ENCODE measurements at regions of chr4 and their contacts with region 1.

Region 1: GRCh38 chr4:77819843-77820648 is 878 bp upstream of the CNOT6L start:
- DNase-seq: peak; percentile 95 to 99 (median 98)
- ATAC-seq: peak; percentile 87
- H3K4me3 ChIP-seq: peak overlapping the region; percentile 93
- H3K4me3 Mint-ChIP-seq: peak overlapping the region; percentile 93 to 99 (median 96)
- H3K27ac ChIP-seq: peak overlapping the region; percentile 100
- H3K27ac Mint-ChIP-seq: peak overlapping the region; percentile 88 to 100 (median 99)
- H3K4me1 ChIP-seq: peaks cover 39 to 42% of the 10 kb centered on the region in 2 donors
- H3K4me1 Mint-ChIP-seq: peaks cover 37 to 69% (median 53%) of the 10 kb centered on the region in 7 donors
- H3K27me3 ChIP-seq: no peaks in the 10 kb centered on the region
- H3K27me3 Mint-ChIP-seq: peaks cover 0 to 2% (median 0%) of the 10 kb centered on the region in 5 donors

Region 2: DNA sequence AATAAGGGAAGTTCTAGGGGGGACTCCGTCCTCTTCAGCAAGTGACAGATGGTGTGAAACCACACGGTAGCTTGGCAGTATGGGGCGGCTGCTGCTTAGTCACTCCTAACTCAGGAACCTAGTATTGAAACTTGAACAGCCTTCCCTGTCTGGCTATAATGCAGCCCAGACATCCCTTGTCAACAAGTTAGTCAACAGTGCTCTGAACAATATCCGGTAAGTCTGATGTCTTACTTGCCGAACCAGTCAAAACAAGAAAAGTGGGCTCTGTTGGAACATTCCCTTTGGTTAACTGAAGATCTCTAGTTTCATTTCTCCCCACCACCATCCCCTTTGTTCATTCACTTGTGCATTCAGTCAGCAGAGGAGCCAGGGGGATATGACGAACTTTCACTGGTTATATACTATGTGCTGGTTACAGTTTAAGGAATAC is 233.1 kb before region 1 on chr4:
- CTCF ChIA-PET with region 1: no interaction called
- POLR2A ChIA-PET with region 1: no interaction called
- intact Hi-C with region 1: loop called in 1 of 2 experiments (anchors 2 kb)
- DNase-seq: peak in 2 of 9 donors; percentile 8 to 64
- ATAC-seq: peak; percentile 89
- H3K4me3 ChIP-seq: no peak overlapping the region
- H3K4me3 Mint-ChIP-seq: peak overlapping the region in 1 of 10 donors; percentile 64
- H3K27ac ChIP-seq: no peak overlapping the region
- H3K27ac Mint-ChIP-seq: peak overlapping the region in 2 of 9 donors; percentile 10 to 75
- H3K4me1 ChIP-seq: no peaks in the 10 kb centered on the region
- H3K4me1 Mint-ChIP-seq: peaks cover 0 to 33% (median 9%) of the 10 kb centered on the region in 7 donors
- H3K27me3 ChIP-seq: no peaks in the 10 kb centered on the region
- H3K27me3 Mint-ChIP-seq: peaks cover 0 to 9% (median 0%) of the 10 kb centered on the region in 5 donors

Region 3: DNA sequence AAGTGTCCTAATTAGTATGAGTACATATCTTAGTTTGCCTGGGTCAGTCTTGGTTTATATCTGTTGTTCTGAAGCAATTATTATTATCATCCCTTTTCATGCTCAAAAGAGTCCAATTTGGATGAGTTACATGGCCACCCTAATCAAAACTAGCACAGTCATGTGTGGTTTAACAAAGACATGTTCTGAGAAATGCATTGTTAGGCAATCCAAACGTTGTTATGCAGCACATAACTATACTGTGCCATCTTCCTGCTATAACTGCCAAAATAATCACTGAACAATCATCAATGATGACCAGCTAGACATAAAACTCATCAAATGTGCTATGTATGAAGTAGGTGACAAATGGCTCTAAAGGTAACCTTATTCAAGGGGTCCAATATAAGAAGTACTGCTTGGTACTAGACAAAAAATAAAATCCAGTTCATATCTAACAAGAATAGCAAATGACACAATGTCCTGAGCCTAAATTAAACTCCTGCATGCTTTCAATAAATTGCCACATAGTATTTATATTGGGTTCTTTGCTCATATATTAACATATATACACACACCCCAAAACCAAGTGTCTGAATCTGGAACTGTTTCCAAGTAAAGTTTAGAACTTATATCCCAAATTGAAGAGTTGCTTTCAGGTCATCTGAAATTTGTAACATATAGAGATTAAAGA is 42.8 kb before region 1 on chr4:
- CTCF ChIA-PET with region 1: no interaction called
- POLR2A ChIA-PET with region 1: interaction called, 4 read pairs
- intact Hi-C with region 1: loop called (anchors 5 kb)
- DNase-seq: no peak
- ATAC-seq: peak; percentile 29
- H3K4me3 ChIP-seq: no peak overlapping the region
- H3K4me3 Mint-ChIP-seq: peak overlapping the region in 5 of 10 donors; percentile 4 to 57 (median 23)
- H3K27ac ChIP-seq: no peak overlapping the region
- H3K27ac Mint-ChIP-seq: peak overlapping the region in 7 of 9 donors; percentile 35 to 80 (median 78)
- H3K4me1 ChIP-seq: peaks cover 7 to 12% of the 10 kb centered on the region in 2 donors
- H3K4me1 Mint-ChIP-seq: peaks cover 32 to 74% (median 66%) of the 10 kb centered on the region in 7 donors
- H3K27me3 ChIP-seq: no peaks in the 10 kb centered on the region
- H3K27me3 Mint-ChIP-seq: no peaks in the 10 kb centered on the region

Region 4: DNA sequence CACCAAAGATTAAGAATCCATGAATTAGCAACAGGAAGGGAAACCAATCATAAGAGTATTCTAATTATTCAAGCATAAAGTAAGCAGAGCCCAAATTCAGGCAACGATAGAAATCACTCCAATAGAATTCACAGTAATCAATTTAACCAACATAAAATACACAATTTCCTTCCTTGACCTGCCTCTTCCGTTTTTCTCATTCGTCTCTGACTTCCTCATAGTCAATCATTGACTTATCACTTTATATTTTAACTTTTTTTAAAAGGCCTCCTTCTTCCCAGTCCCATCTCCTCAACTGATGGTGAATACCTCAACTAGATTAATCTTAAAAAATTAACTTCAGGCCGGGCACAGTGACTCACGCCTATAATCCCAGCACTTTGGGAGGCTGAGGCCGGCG is 14.2 kb before region 1 on chr4:
- CTCF ChIA-PET with region 1: no interaction called
- POLR2A ChIA-PET with region 1: interaction called, 41 read pairs
- intact Hi-C with region 1: loop called (anchors 1 kb)
- DNase-seq: no peak
- ATAC-seq: no peak
- H3K4me3 ChIP-seq: no peak overlapping the region
- H3K4me3 Mint-ChIP-seq: peak overlapping the region; percentile 5 to 64 (median 52)
- H3K27ac ChIP-seq: no peak overlapping the region
- H3K27ac Mint-ChIP-seq: peak overlapping the region in 7 of 9 donors; percentile 53 to 82 (median 66)
- H3K4me1 ChIP-seq: peaks cover 39 to 66% of the 10 kb centered on the region in 2 donors
- H3K4me1 Mint-ChIP-seq: peaks cover 54 to 96% (median 76%) of the 10 kb centered on the region in 7 donors
- H3K27me3 ChIP-seq: no peaks in the 10 kb centered on the region
- H3K27me3 Mint-ChIP-seq: no peaks in the 10 kb centered on the region

Region 5: GRCh38 chr4:77843628-77844027 is 23.6 kb after region 1 on chr4:
- CTCF ChIA-PET with region 1: no interaction called
- POLR2A ChIA-PET with region 1: interaction called, 122 read pairs
- intact Hi-C with region 1: no loop called
- DNase-seq: no peak
- ATAC-seq: no peak
- H3K4me3 ChIP-seq: no peak overlapping the region
- H3K4me3 Mint-ChIP-seq: no peak overlapping the region
- H3K27ac ChIP-seq: no peak overlapping the region
- H3K27ac Mint-ChIP-seq: peak overlapping the region in 3 of 9 donors; percentile 0 to 62 (median 55)
- H3K4me1 ChIP-seq: no peaks in the 10 kb centered on the region
- H3K4me1 Mint-ChIP-seq: peaks cover 0 to 24% (median 11%) of the 10 kb centered on the region in 7 donors
- H3K27me3 ChIP-seq: no peaks in the 10 kb centered on the region
- H3K27me3 Mint-ChIP-seq: no peaks in the 10 kb centered on the region

Region 6: DNA sequence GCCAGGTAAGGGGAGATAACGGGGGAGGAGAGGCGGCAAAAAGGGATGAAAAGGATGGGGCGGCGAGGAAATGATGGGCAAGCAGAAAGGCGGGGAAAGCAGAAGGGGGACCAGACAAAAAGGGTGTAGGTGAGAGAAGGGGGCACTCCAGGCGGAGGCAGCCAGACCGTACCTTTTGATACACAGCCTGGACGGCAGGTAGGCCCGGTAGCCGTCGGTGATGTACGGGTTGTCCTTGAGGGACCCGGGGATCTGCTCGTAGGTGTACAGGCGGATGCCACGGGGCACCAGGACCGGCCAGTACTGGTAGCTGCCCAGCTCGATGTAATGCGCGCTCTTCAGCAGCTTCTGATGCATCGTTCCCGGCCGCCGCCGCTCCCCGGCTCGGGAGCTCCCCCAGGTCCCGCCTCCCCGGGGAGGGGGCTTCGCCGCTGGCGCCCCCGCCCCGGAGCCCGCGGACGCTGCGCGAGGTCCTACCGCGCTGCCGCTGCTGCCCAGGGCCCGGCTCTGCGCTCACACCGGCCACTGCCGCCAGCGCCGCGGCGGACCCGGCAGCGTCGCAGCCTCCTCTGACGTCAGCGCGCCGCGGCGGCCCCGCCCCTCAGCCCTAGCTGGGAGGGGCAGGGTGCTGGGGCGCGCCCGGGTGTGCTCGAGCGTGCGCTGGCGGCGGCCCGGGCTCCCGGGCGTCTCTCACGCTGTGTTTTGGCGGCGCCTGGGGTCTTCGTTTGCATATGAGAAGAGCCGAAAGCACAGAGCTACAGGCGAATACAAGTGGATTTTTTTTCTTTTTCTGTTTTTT is 1119.0 kb after region 1 on chr4 and contains the start of gene PAQR3:
- CTCF ChIA-PET with region 1: no interaction called
- POLR2A ChIA-PET with region 1: no interaction called
- intact Hi-C with region 1: loop called in 1 of 2 experiments (anchors 5 kb)
- DNase-seq: peak; percentile 70 to 91 (median 86)
- ATAC-seq: peak; percentile 98
- H3K4me3 ChIP-seq: peak within 1 kb of the TSS; percentile 86
- H3K4me3 Mint-ChIP-seq: peak within 1 kb of the TSS; percentile 92 to 100 (median 98)
- H3K27ac ChIP-seq: peak within 1 kb of the TSS; percentile 82
- H3K27ac Mint-ChIP-seq: peak within 1 kb of the TSS; percentile 82 to 97 (median 92)
- H3K4me1 ChIP-seq: peaks cover 5 to 14% of the 10 kb centered on the region in 2 donors
- H3K4me1 Mint-ChIP-seq: peaks cover 23 to 54% (median 39%) of the 10 kb centered on the region in 7 donors
- H3K27me3 ChIP-seq: no peaks in the 10 kb centered on the region
- H3K27me3 Mint-ChIP-seq: peaks cover 8 to 18% (median 11%) of the 10 kb centered on the region in 5 donors
- total RNA-seq, gene PAQR3: 13.1 to 24.3 (median 15.8) TPM

Measured in naive thymus-derived CD4-positive, alpha-beta T cell (primary cell).